Heart right ventricle (tissue), 16 donors: ENCODE measurements at regions of chr9 and their contacts with region 1.

Region 1: GRCh38 chr9:105405514-105406131 is 42.2 kb upstream of the FSD1L start:
- DNase-seq: no peak
- ATAC-seq: no peak
- H3K4me3 ChIP-seq: no peak overlapping the region
- H3K27ac ChIP-seq: no peak overlapping the region
- H3K4me1 ChIP-seq: peaks cover 0 to 9% (median 0%) of the 10 kb centered on the region in 9 donors
- H3K27me3 ChIP-seq: no peaks in the 10 kb centered on the region
- CTCF ChIP-seq: no peak

Region 2: GRCh38 chr9:105168870-105169319 is 236.7 kb before region 1 on chr9:
- intact Hi-C with region 1: loop called in 2 of 10 experiments (anchors 5 to 10 kb)
- DNase-seq: no peak
- ATAC-seq: peak in 5 of 8 donors; percentile 23 to 62 (median 30)
- H3K4me3 ChIP-seq: no peak overlapping the region
- H3K27ac ChIP-seq: no peak overlapping the region
- H3K4me1 ChIP-seq: peaks cover 0 to 12% (median 5%) of the 10 kb centered on the region in 9 donors
- H3K27me3 ChIP-seq: no peaks in the 10 kb centered on the region
- CTCF ChIP-seq: no peak

Region 3: GRCh38 chr9:105259731-105260612 is 145.7 kb before region 1 on chr9:
- intact Hi-C with region 1: loop called in 1 of 10 experiments (anchors 10 kb)
- DNase-seq: no peak
- ATAC-seq: peak in 4 of 8 donors; percentile 21 to 83 (median 45)
- H3K4me3 ChIP-seq: no peak overlapping the region
- H3K27ac ChIP-seq: peak overlapping the region in 1 of 10 donors; percentile 23
- H3K4me1 ChIP-seq: peaks cover 4 to 45% (median 30%) of the 10 kb centered on the region in 9 donors
- H3K27me3 ChIP-seq: no peaks in the 10 kb centered on the region
- CTCF ChIP-seq: no peak

Region 4: GRCh38 chr9:105593145-105593544 is 187.5 kb after region 1 on chr9:
- intact Hi-C with region 1: no loop called
- DNase-seq: no peak
- ATAC-seq: no peak
- H3K4me3 ChIP-seq: no peak overlapping the region
- H3K27ac ChIP-seq: no peak overlapping the region
- H3K4me1 ChIP-seq: no peaks in the 10 kb centered on the region
- H3K27me3 ChIP-seq: no peaks in the 10 kb centered on the region
- CTCF ChIP-seq: no peak

Region 5: GRCh38 chr9:105608721-105609598 is 203.3 kb after region 1 on chr9:
- intact Hi-C with region 1: no loop called
- DNase-seq: peak in 1 of 2 donors; percentile 6
- ATAC-seq: no peak
- H3K4me3 ChIP-seq: no peak overlapping the region
- H3K27ac ChIP-seq: no peak overlapping the region
- H3K4me1 ChIP-seq: no peaks in the 10 kb centered on the region
- H3K27me3 ChIP-seq: no peaks in the 10 kb centered on the region
- CTCF ChIP-seq: peak in 8 of 9 donors; percentile 31 to 71 (median 61)